K562 (cell line): ENCODE measurements at regions of chr16 and their contacts with region 1.

Region 1: GRCh38 chr16:20741554-20742285 is at the start of gene THUMPD1:
- DNase-seq: peak; percentile 93 to 97 (median 95)
- ATAC-seq: peak; percentile 93
- H3K4me3 ChIP-seq: peak within 1 kb of the TSS; percentile 96
- H3K27ac ChIP-seq: peak within 1 kb of the TSS; percentile 93
- H3K4me1 ChIP-seq: peaks cover 38 to 55% of the 10 kb centered on the region in 2 experiments
- H3K27me3 ChIP-seq: no peaks in the 10 kb centered on the region
- CTCF ChIP-seq: peak; percentile 30 to 43 (median 40); a peak in 3 of 6 replicates
- EP300 ChIP-seq: peak; percentile 35; the same call in 1 of the 2 replicates
- POLR2A ChIP-seq: peak; percentile 90
- RAD21 ChIP-seq: peak in 1 of 2 experiments; percentile 18; a peak in 2 of 4 replicates
- polyA plus RNA-seq, gene THUMPD1: 37.8 to 41.0 TPM

Region 2: DNA sequence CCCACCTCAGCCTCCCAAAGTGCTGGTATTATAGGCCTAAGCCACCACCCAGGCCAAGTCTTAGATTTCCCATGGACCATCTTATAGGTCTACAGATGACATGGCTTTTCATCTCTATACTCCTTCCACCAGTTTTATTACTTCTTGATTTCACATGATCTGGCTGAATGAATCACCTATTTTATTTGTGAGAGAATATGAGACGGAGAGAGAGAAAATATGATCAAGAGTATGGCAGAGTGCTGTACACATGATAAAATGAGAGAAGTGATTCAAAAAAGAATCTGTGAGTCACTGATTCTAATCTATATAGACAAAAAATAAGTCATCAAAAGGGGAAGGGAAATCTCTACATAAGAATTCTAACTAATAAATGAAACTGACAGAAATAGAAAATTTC is 57.9 kb before region 1 on chr16:
- CTCF ChIA-PET with region 1: no interaction called
- POLR2A ChIA-PET with region 1: no interaction called
- in situ Hi-C with region 1: no loop called
- intact Hi-C with region 1: loop called (anchors 5 kb)
- DNase-seq: no peak
- ATAC-seq: no peak
- H3K4me3 ChIP-seq: no peak overlapping the region
- H3K27ac ChIP-seq: no peak overlapping the region
- H3K4me1 ChIP-seq: peaks cover 3 to 26% of the 10 kb centered on the region in 2 experiments; a peak in 2 of 5 replicates
- H3K27me3 ChIP-seq: no peaks in the 10 kb centered on the region
- CTCF ChIP-seq: no peak
- EP300 ChIP-seq: no peak
- POLR2A ChIP-seq: no peak
- RAD21 ChIP-seq: no peak

Region 3: GRCh38 chr16:20704281-20704680 is 37.4 kb before region 1 on chr16:
- CTCF ChIA-PET with region 1: no interaction called
- POLR2A ChIA-PET with region 1: no interaction called
- in situ Hi-C with region 1: no loop called
- intact Hi-C with region 1: no loop called
- DNase-seq: no peak
- ATAC-seq: no peak
- H3K4me3 ChIP-seq: no peak overlapping the region
- H3K27ac ChIP-seq: no peak overlapping the region
- H3K4me1 ChIP-seq: no peaks in the 10 kb centered on the region; a peak in 1 of 5 replicates
- H3K27me3 ChIP-seq: no peaks in the 10 kb centered on the region
- CTCF ChIP-seq: no peak
- EP300 ChIP-seq: no peak
- POLR2A ChIP-seq: no peak
- RAD21 ChIP-seq: no peak

Region 4: GRCh38 chr16:20774703-20775362 is 33.1 kb after region 1 on chr16:
- CTCF ChIA-PET with region 1: interaction called, 3 read pairs
- POLR2A ChIA-PET with region 1: no interaction called
- in situ Hi-C with region 1: no loop called
- intact Hi-C with region 1: loop called (anchors 5 kb)
- DNase-seq: peak; percentile 54 to 73 (median 56)
- ATAC-seq: peak; percentile 97
- H3K4me3 ChIP-seq: no peak overlapping the region
- H3K27ac ChIP-seq: no peak overlapping the region
- H3K4me1 ChIP-seq: peaks cover 0 to 5% of the 10 kb centered on the region in 2 experiments; a peak in 2 of 5 replicates
- H3K27me3 ChIP-seq: no peaks in the 10 kb centered on the region
- CTCF ChIP-seq: peak; percentile 66 to 76 (median 67)
- EP300 ChIP-seq: no peak
- POLR2A ChIP-seq: no peak
- RAD21 ChIP-seq: peak in 1 of 2 experiments; percentile 53; a peak in 2 of 4 replicates